GM12878 (cell line): ENCODE measurements at regions of chr11 and their contacts with region 1.

Region 1: DNA sequence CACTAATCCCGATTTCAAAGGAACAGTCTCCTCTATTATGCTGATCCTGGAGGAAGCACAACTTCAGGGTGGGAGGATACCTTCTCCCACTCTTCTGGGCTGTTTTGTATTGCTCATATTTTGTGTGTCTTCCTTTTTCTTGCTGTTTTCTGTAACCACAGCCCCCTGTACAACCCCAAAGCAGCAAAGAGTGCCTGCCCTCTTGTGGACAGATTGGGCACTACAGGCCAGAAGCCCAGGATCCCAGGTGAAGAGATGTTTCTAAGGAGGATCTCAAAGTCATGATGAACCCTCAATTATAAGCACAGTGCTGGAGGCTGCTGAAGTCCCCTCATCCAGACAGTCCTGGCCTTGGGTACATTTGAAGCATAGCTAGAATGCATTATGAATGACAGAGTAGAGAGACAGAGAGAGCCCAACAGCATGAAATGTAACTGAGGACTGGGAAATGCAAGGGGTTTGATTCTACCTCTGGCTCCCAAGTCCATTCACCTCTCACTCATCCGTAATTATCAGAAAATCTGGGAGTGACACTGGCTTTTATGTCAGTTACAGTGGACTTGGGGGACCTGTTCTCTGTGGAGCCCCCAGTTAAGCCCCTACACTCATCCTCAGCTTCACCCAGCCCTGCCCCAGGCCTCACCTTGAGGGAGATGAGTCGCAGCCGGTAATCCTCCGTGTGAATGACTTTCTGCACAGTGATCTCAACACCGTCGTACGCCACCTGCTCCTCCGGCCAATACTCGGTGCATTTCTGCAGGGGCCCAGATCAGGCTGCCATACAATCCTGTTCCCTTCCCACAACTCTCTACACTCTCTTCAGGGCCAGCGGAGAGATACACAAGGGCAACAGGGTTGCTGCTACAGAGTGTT is 6.2 kb upstream of the IGSF22 start:
- DNase-seq: peak; percentile 24
- ATAC-seq: peak; percentile 84
- H3K4me3 ChIP-seq: no peak overlapping the region
- H3K27ac ChIP-seq: no peak overlapping the region
- H3K4me1 ChIP-seq: peaks cover 8% of the 10 kb centered on the region
- H3K27me3 ChIP-seq: no peaks in the 10 kb centered on the region
- CTCF ChIP-seq: peak; percentile 89 to 99 (median 99)
- EP300 ChIP-seq: no peak
- POLR2A ChIP-seq: no peak
- RAD21 ChIP-seq: peak; percentile 89

Region 2: GRCh38 chr11:18115360-18116127 is 616.6 kb before region 1 on chr11:
- CTCF ChIA-PET with region 1: interaction called, 12 read pairs
- POLR2A ChIA-PET with region 1: no interaction called
- RAD21 ChIA-PET with region 1: interaction called, 14 read pairs
- SMC1A ChIA-PET with region 1: no interaction called
- in situ Hi-C with region 1: no loop called
- intact Hi-C with region 1: loop called (anchors 2 kb)
- DNase-seq: peak; percentile 19
- ATAC-seq: peak; percentile 97
- H3K4me3 ChIP-seq: no peak overlapping the region
- H3K27ac ChIP-seq: no peak overlapping the region
- H3K4me1 ChIP-seq: no peaks in the 10 kb centered on the region
- H3K27me3 ChIP-seq: peaks cover 0 to 1% of the 10 kb centered on the region in 2 experiments; a peak in 2 of 4 replicates
- CTCF ChIP-seq: peak; percentile 85 to 91 (median 87); a peak in 5 of 6 replicates
- EP300 ChIP-seq: no peak
- POLR2A ChIP-seq: no peak
- RAD21 ChIP-seq: peak; percentile 92

Region 3: GRCh38 chr11:18615628-18616392 is 116.4 kb before region 1 on chr11:
- CTCF ChIA-PET with region 1: interaction called, 12 read pairs
- POLR2A ChIA-PET with region 1: no interaction called
- RAD21 ChIA-PET with region 1: no interaction called
- SMC1A ChIA-PET with region 1: interaction called, 4 read pairs
- in situ Hi-C with region 1: no loop called
- intact Hi-C with region 1: no loop called
- DNase-seq: peak; percentile 79
- ATAC-seq: peak; percentile 93
- H3K4me3 ChIP-seq: peak overlapping the region; percentile 8; the same call in 1 of the 2 replicates
- H3K27ac ChIP-seq: peak overlapping the region; percentile 69
- H3K4me1 ChIP-seq: peaks cover 38% of the 10 kb centered on the region
- H3K27me3 ChIP-seq: no peaks in the 10 kb centered on the region
- CTCF ChIP-seq: no peak
- EP300 ChIP-seq: peak; percentile 75 to 85
- POLR2A ChIP-seq: no peak
- RAD21 ChIP-seq: no peak

Region 4: DNA sequence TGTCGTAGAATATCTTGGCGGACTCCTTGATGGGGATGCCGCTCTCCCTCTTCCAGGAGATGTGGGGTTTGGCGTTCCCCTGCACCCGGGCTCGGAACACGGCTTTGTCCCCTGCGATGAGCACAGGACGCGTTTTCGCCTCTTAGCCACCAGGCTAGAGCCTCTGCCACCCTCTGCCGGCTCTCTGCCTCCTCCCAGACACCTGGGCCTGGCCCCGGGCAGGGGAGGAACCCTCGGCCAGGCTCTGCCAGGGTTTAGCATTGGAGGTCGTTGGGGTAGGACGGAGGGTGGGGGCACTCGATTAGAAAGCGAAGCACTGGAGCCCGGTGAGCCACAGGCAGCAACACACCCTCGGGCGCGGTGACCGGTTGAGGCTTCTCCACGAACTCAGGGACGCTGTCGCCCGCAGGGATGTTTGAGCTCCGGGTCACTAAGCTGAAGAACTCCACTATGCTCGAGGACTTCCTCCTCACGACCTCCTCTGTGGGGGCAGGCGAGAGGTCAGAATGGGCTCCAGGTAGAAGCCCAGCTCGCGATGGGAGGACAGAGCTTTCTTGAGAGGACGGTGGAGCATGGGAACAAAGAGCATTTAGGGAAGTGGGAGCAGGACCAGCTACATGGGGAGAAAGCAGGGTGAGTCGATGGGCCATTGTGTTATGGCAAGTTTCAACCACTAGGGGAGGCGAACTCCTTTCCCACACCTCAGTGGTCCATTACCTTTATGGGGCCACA is 10.5 kb before region 1 on chr11:
- CTCF ChIA-PET with region 1: interaction called, 109 read pairs
- POLR2A ChIA-PET with region 1: interaction called, 4 read pairs
- RAD21 ChIA-PET with region 1: interaction called, 22 read pairs
- SMC1A ChIA-PET with region 1: interaction called, 26 read pairs
- in situ Hi-C with region 1: no loop called
- intact Hi-C with region 1: no loop called
- DNase-seq: no peak
- ATAC-seq: peak; percentile 91
- H3K4me3 ChIP-seq: peak overlapping the region; percentile 71
- H3K27ac ChIP-seq: no peak overlapping the region
- H3K4me1 ChIP-seq: peaks cover 9% of the 10 kb centered on the region
- H3K27me3 ChIP-seq: no peaks in the 10 kb centered on the region; a peak in 3 of 4 replicates
- CTCF ChIP-seq: peak; percentile 78 to 92 (median 87)
- EP300 ChIP-seq: no peak
- POLR2A ChIP-seq: no peak
- RAD21 ChIP-seq: peak; percentile 35

Region 5: GRCh38 chr11:18757811-18758210 is 25.6 kb after region 1 on chr11:
- CTCF ChIA-PET with region 1: interaction called, 494 read pairs
- POLR2A ChIA-PET with region 1: no interaction called
- RAD21 ChIA-PET with region 1: interaction called, 5 read pairs
- SMC1A ChIA-PET with region 1: interaction called, 34 read pairs
- in situ Hi-C with region 1: no loop called
- intact Hi-C with region 1: no loop called
- DNase-seq: no peak
- ATAC-seq: no peak
- H3K4me3 ChIP-seq: no peak overlapping the region
- H3K27ac ChIP-seq: no peak overlapping the region
- H3K4me1 ChIP-seq: no peaks in the 10 kb centered on the region
- H3K27me3 ChIP-seq: no peaks in the 10 kb centered on the region; a peak in 2 of 4 replicates
- CTCF ChIP-seq: no peak
- EP300 ChIP-seq: no peak
- POLR2A ChIP-seq: no peak
- RAD21 ChIP-seq: no peak

Region 6: GRCh38 chr11:18775492-18776292 is 43.5 kb after region 1 on chr11:
- CTCF ChIA-PET with region 1: interaction called, 494 read pairs
- POLR2A ChIA-PET with region 1: no interaction called
- RAD21 ChIA-PET with region 1: interaction called, 4 read pairs
- SMC1A ChIA-PET with region 1: interaction called, 11 read pairs
- in situ Hi-C with region 1: no loop called
- intact Hi-C with region 1: no loop called
- DNase-seq: no peak
- ATAC-seq: peak; percentile 94
- H3K4me3 ChIP-seq: no peak overlapping the region
- H3K27ac ChIP-seq: no peak overlapping the region
- H3K4me1 ChIP-seq: peaks cover 5% of the 10 kb centered on the region
- H3K27me3 ChIP-seq: no peaks in the 10 kb centered on the region; a peak in 1 of 4 replicates
- CTCF ChIP-seq: peak; percentile 81 to 92 (median 92)
- EP300 ChIP-seq: no peak
- POLR2A ChIP-seq: no peak
- RAD21 ChIP-seq: peak; percentile 70

Region 7: GRCh38 chr11:18802381-18803257 is 70.4 kb after region 1 on chr11:
- CTCF ChIA-PET with region 1: interaction called, 24 read pairs
- POLR2A ChIA-PET with region 1: no interaction called
- RAD21 ChIA-PET with region 1: interaction called, 7 read pairs
- SMC1A ChIA-PET with region 1: interaction called, 10 read pairs
- in situ Hi-C with region 1: loop called (anchors 10 kb)
- intact Hi-C with region 1: loop called (anchors 2 kb)
- DNase-seq: peak; percentile 12
- ATAC-seq: peak; percentile 80
- H3K4me3 ChIP-seq: no peak overlapping the region
- H3K27ac ChIP-seq: no peak overlapping the region
- H3K4me1 ChIP-seq: no peaks in the 10 kb centered on the region
- H3K27me3 ChIP-seq: peaks cover 0 to 9% of the 10 kb centered on the region in 2 experiments; a peak in 2 of 4 replicates
- CTCF ChIP-seq: peak; percentile 53 to 73 (median 71); a peak in 5 of 6 replicates
- EP300 ChIP-seq: no peak
- POLR2A ChIP-seq: no peak
- RAD21 ChIP-seq: peak; percentile 65